Activated CD4-positive, alpha-beta T cell treated with anti-CD3 and anti-CD28 coated beads for 36 hours (primary cell): ENCODE measurements at regions of chr12 and their contacts with region 1.

Region 1: GRCh38 chr12:92593734-92594402 is 108.9 kb upstream of the PLEKHG7 start:
- DNase-seq: peak; percentile 83
- ATAC-seq: peak; percentile 95
- H3K4me3 Mint-ChIP-seq: peak overlapping the region; percentile 5
- H3K27ac Mint-ChIP-seq: peak overlapping the region; percentile 92
- H3K4me1 Mint-ChIP-seq: peaks cover 84% of the 10 kb centered on the region
- H3K27me3 Mint-ChIP-seq: no peaks in the 10 kb centered on the region

Region 2: DNA sequence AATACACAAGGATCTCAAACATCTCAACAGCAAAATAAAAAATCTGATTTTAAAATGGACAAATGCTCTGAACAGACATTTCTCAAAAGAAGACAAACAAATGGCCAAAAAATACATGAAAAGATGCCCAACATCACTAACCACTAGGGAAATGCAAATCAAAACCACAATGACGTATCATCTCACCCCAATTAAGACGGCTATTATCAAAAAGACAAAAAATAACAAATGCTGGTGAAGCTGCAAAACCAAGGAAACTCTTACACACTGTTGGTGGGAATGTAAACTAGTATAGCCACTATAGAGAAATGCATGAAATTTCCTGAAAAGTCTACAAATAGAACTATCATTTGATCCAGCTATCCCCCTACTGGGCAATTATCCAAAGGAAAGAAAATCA is 593.3 kb before region 1 on chr12:
- CTCF ChIA-PET with region 1: no interaction called
- POLR2A ChIA-PET with region 1: no interaction called
- intact Hi-C with region 1: no loop called
- DNase-seq: no peak
- ATAC-seq: no peak
- H3K4me3 Mint-ChIP-seq: no peak overlapping the region
- H3K27ac Mint-ChIP-seq: no peak overlapping the region
- H3K4me1 Mint-ChIP-seq: peaks cover 52% of the 10 kb centered on the region
- H3K27me3 Mint-ChIP-seq: no peaks in the 10 kb centered on the region

Region 3: DNA sequence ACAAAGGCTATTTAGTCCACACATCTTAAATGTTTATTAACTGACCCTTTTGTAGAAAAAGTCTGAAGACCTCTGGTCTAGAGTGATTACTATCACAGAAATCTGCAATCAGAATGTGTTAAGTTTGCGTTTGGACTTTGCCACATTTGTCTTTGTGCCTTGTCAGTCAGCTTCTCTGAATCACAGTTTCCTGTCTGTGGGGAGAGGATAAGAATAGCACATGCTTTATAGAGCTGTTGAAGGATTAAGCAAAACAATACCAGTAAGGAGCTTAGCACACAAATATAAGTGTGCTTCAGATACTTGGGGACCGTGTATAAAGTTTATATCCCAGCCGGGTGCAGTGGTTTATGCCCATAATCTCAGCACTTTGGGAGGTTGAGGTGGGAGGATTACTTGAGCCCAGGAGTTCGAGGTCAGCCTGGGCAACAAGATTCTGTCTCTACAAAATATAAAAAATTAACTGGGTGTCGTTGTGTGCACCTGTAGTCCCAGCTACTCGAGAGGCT is 385.2 kb before region 1 on chr12:
- CTCF ChIA-PET with region 1: no interaction called
- POLR2A ChIA-PET with region 1: no interaction called
- intact Hi-C with region 1: loop called (anchors 5 to 10 kb)
- DNase-seq: peak; percentile 40
- ATAC-seq: peak; percentile 77
- H3K4me3 Mint-ChIP-seq: peak overlapping the region; percentile 67
- H3K27ac Mint-ChIP-seq: peak overlapping the region; percentile 81
- H3K4me1 Mint-ChIP-seq: peaks cover 32% of the 10 kb centered on the region
- H3K27me3 Mint-ChIP-seq: no peaks in the 10 kb centered on the region

Region 4: DNA sequence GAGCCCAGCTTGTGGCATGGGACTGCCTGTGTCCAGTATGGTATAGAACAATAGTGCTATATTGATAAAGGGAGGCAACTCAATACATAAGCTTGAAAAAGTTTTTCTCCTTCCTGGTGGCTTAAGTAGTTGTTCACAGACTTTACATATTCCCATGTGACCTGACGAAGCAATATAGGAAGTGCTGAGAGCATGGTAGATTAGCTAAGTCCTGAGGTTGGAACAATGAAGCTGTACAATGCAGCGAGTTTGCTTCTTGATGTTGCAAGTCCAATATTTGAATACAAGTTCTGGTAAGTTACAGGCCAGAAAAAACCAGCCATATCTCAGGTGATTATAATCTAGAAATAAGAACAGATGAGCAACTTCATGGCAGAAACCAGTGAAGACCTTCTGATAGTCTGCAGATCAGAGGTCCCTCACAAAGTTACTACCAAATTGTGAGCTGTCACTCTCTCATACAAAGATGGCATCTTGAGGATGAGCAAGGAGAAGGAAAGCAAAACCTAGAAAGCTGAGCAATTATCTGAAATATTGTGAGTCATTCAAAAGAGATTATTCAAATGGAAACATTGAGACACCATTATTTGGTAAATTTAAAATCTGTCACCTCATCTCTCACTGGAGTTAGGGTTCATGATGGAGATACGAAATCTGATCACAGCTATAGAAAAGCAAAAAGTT is 375.3 kb before region 1 on chr12:
- CTCF ChIA-PET with region 1: no interaction called
- POLR2A ChIA-PET with region 1: no interaction called
- intact Hi-C with region 1: loop called (anchors 2 to 10 kb)
- DNase-seq: no peak
- ATAC-seq: peak; percentile 96
- H3K4me3 Mint-ChIP-seq: peak overlapping the region; percentile 20
- H3K27ac Mint-ChIP-seq: peak overlapping the region; percentile 84
- H3K4me1 Mint-ChIP-seq: peaks cover 24% of the 10 kb centered on the region
- H3K27me3 Mint-ChIP-seq: no peaks in the 10 kb centered on the region

Region 5: DNA sequence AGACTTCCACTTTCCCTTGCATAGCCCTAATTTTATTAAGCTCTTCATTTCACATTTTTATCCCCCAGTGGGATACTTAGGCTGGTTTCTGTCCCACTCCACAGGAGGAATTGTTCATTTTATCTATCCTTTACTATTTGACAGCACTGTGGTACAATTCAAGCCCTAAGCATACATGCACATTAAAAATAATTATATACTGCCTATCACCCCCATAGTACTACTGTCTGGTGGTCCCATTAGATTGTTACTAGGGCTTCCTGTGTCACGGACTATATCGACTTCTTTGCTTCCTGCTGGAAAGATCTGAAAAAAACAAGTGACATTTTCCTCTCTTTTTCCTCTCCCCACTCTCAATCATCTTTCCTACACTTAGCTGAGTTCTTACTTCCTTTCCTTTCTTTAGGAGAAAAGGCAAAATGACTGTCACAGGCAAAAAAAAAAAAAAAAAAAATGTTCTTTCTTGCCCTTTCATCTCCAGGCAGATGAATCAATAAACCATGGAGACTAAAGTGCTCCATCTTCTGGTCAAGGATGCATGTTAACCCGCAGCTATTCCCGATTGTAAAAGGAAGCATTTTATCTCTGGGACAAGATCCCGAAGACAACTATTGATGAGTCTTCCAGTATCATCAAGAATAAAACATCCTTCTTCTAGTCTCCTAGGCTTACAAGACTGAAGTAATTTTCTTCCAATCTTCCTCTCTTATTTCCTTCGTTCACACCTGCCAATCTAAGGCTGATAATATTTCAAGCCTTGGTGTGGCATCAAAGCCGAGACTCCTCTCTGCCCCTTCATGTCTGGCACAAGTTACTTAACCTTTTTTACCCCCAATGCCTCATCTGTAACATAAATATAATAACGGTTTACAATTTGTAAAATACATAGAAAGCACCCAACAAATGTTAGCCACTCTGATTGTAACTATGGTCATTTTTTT is 14.6 kb after region 1 on chr12:
- CTCF ChIA-PET with region 1: interaction called, 6 read pairs
- POLR2A ChIA-PET with region 1: interaction called, 4 read pairs
- intact Hi-C with region 1: loop called in 1 of 2 experiments (anchors 1 kb)
- DNase-seq: no peak
- ATAC-seq: no peak
- H3K4me3 Mint-ChIP-seq: peak overlapping the region; percentile 5
- H3K27ac Mint-ChIP-seq: peak overlapping the region; percentile 58
- H3K4me1 Mint-ChIP-seq: peaks cover 30% of the 10 kb centered on the region
- H3K27me3 Mint-ChIP-seq: no peaks in the 10 kb centered on the region

Region 6: DNA sequence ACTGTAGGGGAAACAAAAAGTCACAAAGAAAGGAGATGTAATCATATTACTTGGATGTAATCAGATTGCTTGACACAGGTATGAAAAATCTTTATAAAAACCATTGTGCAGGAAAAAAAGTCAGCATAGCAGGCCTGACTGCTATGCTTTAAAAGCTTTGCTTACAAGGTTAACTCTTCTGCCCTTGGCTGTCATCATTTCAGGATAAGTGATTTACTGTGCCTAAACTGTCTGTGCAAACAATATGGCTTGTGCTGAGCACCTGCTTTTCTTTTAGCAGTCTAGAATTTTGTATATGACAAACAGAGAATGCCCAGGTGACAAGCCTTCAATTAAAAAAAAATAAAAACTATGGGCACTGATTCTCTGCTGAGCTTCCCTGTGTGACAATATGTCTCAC is 45.1 kb after region 1 on chr12:
- CTCF ChIA-PET with region 1: no interaction called
- POLR2A ChIA-PET with region 1: no interaction called
- intact Hi-C with region 1: no loop called
- DNase-seq: no peak
- ATAC-seq: no peak
- H3K4me3 Mint-ChIP-seq: no peak overlapping the region
- H3K27ac Mint-ChIP-seq: no peak overlapping the region
- H3K4me1 Mint-ChIP-seq: no peaks in the 10 kb centered on the region
- H3K27me3 Mint-ChIP-seq: no peaks in the 10 kb centered on the region